ENCODE measurements at regions of chr6 and their contacts with region 1.

Region 1: GRCh38 chr6:17098538-17098937 is 3.3 kb upstream of the STMND1 start:
- H3K4me3 ChIP-seq: no peak overlapping the region
- H3K27ac ChIP-seq: no peak overlapping the region
- H3K4me1 ChIP-seq: peaks cover 9% of the 10 kb centered on the region; the same call in 1 of the 2 replicates
- CTCF ChIP-seq: no peak

Region 2: DNA sequence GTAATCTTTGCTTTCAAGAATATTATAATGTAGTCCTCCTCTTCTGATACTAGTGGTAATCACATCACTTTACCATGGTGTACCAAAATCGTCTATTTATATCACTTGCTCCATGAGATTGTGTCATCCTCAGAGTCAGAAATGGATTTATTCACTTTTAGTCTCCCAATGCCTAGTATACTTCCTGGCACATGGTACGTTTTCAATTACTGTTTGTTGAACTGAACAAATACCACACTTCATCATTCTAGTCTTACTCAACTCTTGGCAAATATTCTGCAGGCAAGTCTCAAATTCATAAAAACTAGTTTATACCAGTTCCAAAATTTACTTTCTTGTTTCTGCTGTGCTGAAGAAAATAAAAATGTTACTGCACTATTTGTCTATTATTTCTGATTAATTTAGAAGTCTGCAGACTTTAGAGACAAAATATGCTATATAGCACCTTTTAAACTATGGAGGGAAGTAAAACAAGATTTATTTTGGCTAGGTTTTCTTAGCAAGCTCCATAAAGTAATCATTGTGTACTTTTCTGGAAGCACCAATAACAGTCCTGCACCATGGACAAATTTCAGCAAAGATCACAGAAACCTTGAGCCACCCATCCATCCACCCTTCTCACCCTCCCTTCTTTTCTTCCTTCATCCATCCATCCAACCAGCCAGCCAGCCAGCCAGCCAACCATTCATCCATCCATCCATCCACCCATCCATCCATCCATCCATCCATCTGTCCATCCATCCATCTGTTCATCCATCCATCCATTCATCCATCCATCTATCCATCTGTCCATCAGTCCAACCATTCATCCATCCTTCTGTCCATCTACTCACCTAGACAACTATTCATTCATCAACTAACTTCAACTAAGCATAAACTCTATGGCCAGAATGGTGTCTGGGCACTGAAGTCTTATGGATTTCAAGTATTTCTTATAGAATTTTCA is 98.8 kb before region 1 on chr6:
- CTCF ChIA-PET with region 1: no interaction called
- POLR2A ChIA-PET with region 1: no interaction called
- H3K4me3 ChIP-seq: no peak overlapping the region
- H3K27ac ChIP-seq: no peak overlapping the region
- H3K4me1 ChIP-seq: 0 out of 2 replicates have a peak, but pooled peaks cover 3% of the 10 kb centered on the region
- CTCF ChIP-seq: no peak

Region 3: GRCh38 chr6:17086469-17086868 is 12.1 kb before region 1 on chr6:
- CTCF ChIA-PET with region 1: interaction called, 44 read pairs
- POLR2A ChIA-PET with region 1: interaction called, 4 read pairs
- H3K4me3 ChIP-seq: no peak overlapping the region
- H3K27ac ChIP-seq: no peak overlapping the region
- H3K4me1 ChIP-seq: no peaks in the 10 kb centered on the region; the same call in 1 of the 2 replicates
- CTCF ChIP-seq: peak; percentile 55; the same call in 1 of the 2 replicates

Region 4: DNA sequence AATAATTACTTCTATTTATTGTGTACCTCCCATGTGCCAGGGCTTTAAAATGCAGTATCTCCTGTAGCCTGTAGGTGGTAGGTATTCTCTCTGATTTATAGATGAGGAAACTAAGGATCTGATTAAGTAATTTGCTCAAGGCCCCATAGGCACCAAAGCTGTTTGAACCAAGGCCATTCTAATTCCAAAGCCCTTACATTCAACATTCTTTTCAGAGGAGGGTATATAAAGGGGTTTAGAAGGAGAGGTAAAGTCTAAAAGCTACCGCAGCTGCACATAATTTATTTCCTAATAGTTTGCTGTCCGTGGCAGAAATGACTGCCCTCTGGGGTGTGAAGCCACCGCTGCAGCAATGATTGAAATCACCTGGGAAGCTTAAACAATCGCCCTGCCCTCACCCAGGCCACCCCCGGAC is 406.5 kb after region 1 on chr6:
- CTCF ChIA-PET with region 1: no interaction called
- POLR2A ChIA-PET with region 1: no interaction called
- H3K4me3 ChIP-seq: no peak overlapping the region
- H3K27ac ChIP-seq: no peak overlapping the region
- H3K4me1 ChIP-seq: no peaks in the 10 kb centered on the region
- CTCF ChIP-seq: no peak